ENCODE measurements at regions of chr10 and their contacts with region 1.

Region 1: DNA sequence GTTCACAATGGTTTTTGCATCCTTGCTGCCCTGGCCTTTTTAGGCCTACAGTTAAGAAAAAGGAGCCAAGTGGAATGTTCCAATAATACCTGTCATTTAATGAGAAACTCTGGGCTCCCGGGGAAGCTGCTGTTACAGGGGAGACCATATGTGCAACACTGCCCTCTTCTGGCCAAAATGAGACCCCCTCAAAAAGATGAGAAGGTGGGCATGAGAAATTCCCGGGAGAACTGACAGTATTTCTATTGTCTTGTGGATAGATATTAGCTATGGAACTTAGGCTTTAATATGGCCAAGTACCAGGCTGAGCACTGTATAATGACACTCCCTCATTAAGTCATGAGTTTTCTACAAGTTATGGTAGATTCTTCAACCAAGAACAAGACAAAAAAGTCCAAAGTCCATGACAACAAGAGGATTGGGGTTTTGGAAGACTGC is 99.4 kb downstream of the CCDC3 start:
- DNase-seq: peak; percentile 68
- H3K4me3 ChIP-seq: no peak overlapping the region
- H3K27ac ChIP-seq: no peak overlapping the region
- H3K4me1 ChIP-seq: no peaks in the 10 kb centered on the region
- CTCF ChIP-seq: peak; percentile 92

Region 2: DNA sequence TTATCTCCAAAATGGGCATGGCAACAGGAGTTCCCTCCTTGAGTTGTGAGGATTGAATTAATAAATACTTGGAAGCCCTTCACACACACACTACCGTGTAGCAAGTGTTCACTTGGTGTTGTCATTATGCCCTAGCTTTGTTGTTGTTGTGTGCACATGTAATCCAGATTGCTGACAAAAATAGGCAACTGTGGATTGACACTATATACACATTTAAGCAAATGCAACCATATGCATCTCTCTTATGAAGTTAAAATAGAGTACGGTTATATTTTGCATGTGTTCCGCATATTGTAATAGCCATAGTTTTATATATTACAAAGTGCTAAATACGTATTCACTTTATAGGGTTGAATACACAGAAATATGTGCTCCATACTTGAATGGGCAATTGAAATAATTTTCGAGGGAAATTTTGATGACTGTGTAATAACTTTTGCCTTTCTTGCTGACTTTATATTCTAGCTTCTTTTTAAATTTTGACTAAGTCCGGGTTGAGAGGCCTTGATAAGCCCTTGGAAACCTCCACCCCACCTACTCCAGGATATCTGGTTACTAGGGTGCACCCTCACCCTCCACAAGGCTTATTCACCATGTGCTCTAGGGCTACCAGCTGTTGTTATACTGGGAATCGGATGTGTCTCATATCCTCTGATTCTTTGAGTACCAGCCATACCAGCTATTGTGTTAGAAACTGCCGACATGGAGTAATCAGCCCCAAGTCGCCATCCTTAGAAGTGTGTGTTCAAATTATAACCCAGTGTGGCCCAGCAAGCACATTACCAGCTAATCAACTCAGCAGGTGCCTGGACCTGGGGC is 287.8 kb before region 1 on chr10:
- CTCF ChIA-PET with region 1: no interaction called
- POLR2A ChIA-PET with region 1: no interaction called
- intact Hi-C with region 1: no loop called
- DNase-seq: no peak
- H3K4me3 ChIP-seq: no peak overlapping the region
- H3K27ac ChIP-seq: no peak overlapping the region
- H3K4me1 ChIP-seq: no peaks in the 10 kb centered on the region
- CTCF ChIP-seq: no peak

Region 3: DNA sequence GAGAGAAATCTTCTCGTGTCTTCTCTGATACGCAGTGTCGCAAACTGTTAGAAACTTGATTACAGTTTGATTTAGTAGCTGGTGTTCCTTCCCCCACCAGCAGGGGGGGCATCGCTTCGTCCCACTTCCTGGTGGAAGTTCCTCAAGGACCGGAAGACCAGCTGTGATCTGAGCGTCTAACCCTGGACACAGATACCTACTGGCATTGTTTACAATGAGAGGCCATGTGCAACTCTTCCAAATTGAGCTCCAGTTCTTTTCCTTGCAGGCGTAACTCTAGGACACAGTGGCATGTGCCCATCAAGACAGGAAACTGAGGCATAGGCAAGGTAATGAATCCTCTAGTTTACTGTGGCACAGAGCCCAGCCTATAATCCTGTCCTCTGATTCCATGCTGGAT is 119.6 kb before region 1 on chr10:
- CTCF ChIA-PET with region 1: interaction called, 3 read pairs
- POLR2A ChIA-PET with region 1: interaction called, 3 read pairs
- intact Hi-C with region 1: loop called (anchors 5 kb)
- DNase-seq: peak; percentile 53
- H3K4me3 ChIP-seq: no peak overlapping the region
- H3K27ac ChIP-seq: no peak overlapping the region
- H3K4me1 ChIP-seq: no peaks in the 10 kb centered on the region
- CTCF ChIP-seq: peak; percentile 96

Measured in OCI-LY7 (cell line).